ENCODE measurements at regions of chr16 and their contacts with region 1.

Region 1: GRCh38 chr16:30786936-30787612 is at the start of gene ZNF629:
- DNase-seq: peak; percentile 49 to 75
- H3K4me3 ChIP-seq: peak within 1 kb of the TSS; percentile 97
- H3K27ac ChIP-seq: no peak within 1 kb of the TSS
- H3K4me1 ChIP-seq: peaks cover 14% of the 10 kb centered on the region
- H3K27me3 ChIP-seq: no peaks in the 10 kb centered on the region
- CTCF ChIP-seq: no peak
- total RNA-seq, gene ZNF629: 21.7 and 25.6 TPM in 2 replicates

Region 2: DNA sequence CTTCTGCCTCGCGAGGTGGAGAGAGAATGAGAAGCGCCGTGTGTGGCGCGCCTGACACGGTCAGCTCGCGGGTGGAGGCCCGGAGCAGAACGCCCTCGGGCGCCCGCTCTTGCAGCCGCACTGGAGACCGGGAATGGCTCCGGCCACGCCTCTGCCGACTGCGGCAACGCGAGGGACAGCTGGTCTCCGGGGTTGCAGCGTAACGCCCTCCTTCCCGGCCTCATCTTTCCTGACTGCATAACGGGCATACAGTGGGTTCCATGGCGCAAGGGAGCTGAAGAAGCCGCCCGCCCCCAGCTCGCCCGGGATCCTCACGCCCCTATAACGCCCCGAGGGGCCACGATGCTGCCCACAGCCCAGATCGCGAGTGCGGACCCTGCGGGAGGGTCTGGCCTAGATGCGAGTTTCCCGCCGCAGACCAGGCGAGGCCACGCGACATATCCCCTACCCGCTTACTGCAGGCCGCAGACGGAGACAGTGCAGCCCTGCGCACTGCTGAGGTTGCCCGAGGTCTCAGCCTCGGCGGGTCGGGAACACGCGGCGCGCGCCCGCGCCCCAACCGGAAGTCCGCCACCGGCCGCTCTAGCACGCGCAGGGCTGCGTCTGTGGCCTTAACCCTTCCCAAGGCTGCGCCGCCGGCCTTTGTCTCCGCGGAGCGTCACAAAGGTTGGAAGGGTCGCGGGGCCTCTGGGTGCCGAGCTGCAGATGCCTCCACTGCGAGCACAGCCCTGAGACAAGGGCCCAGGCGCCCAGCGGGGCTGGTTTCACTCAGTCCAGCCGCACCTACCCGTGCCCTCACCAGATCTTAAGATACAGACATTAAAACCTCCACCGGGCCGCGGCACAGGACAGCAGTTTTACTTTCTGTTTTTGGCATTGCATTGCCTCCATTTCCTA is 88.0 kb after region 1 on chr16:
- CTCF ChIA-PET with region 1: no interaction called
- POLR2A ChIA-PET with region 1: interaction called, 3 read pairs
- intact Hi-C with region 1: loop called (anchors 1 kb)
- DNase-seq: peak; percentile 75 to 94
- H3K4me3 ChIP-seq: peak overlapping the region; percentile 97
- H3K27ac ChIP-seq: peak overlapping the region; percentile 48
- H3K4me1 ChIP-seq: peaks cover 18% of the 10 kb centered on the region
- H3K27me3 ChIP-seq: no peaks in the 10 kb centered on the region
- CTCF ChIP-seq: no peak